ENCODE measurements at regions of chr3 and their contacts with region 1.

Region 1: GRCh38 chr3:191345334-191345733 is 15.0 kb upstream of the UTS2B start:
- DNase-seq: no peak
- CTCF ChIP-seq: no peak

Region 2: GRCh38 chr3:191282262-191283215 is 62.8 kb before region 1 on chr3:
- CTCF ChIA-PET with region 1: no interaction called
- POLR2A ChIA-PET with region 1: no interaction called
- DNase-seq: no peak
- CTCF ChIP-seq: no peak

Region 3: GRCh38 chr3:191356611-191357439 is 11.5 kb after region 1 on chr3:
- CTCF ChIA-PET with region 1: interaction called, 45 read pairs
- POLR2A ChIA-PET with region 1: no interaction called
- DNase-seq: no peak
- CTCF ChIP-seq: no peak

Region 4: DNA sequence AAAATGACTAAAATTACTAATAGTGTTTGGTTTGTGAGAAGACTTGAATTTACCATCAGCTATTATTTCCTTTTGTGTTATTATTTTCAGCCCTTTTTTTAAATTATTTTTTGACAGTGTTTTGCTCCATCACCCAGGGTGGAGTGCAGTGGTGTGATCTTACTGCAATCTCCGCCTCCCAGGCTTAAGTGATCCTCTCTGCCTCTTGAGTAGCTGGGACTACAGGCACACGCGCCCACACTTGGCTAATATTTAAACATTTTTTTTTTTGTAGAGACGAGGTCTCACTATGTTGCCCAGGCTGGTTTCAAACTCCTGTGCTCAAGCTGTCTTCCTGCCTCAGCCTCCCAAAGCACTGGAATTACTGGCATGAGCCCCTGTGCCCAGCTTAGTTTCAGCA is 16.7 kb after region 1 on chr3:
- CTCF ChIA-PET with region 1: interaction called, 45 read pairs
- POLR2A ChIA-PET with region 1: no interaction called
- DNase-seq: no peak
- CTCF ChIP-seq: no peak

Measured in GM10248 (cell line).